ENCODE measurements at regions of chr19 and their contacts with region 1.

Region 1: GRCh38 chr19:43367822-43368221 is 14.3 kb downstream of the CD177 start:
- DNase-seq: no peak
- H3K4me3 ChIP-seq: no peak overlapping the region
- H3K27ac ChIP-seq: no peak overlapping the region
- H3K4me1 ChIP-seq: no peaks in the 10 kb centered on the region
- H3K27me3 ChIP-seq: no peaks in the 10 kb centered on the region
- CTCF ChIP-seq: no peak
- EP300 ChIP-seq: no peak
- POLR2A ChIP-seq: no peak

Region 2: GRCh38 chr19:44182145-44182544 is 814.3 kb after region 1 on chr19:
- intact Hi-C with region 1: loop called in 1 of 4 experiments (anchors 5 kb)
- DNase-seq: no peak
- H3K4me3 ChIP-seq: no peak overlapping the region
- H3K27ac ChIP-seq: no peak overlapping the region
- H3K4me1 ChIP-seq: no peaks in the 10 kb centered on the region
- H3K27me3 ChIP-seq: no peaks in the 10 kb centered on the region
- CTCF ChIP-seq: no peak
- EP300 ChIP-seq: no peak
- POLR2A ChIP-seq: no peak

Measured in ovary (tissue), 10 donors.